ENCODE measurements at regions of chr16 and their contacts with region 1.

Region 1: GRCh38 chr16:11396241-11397048 is 51.2 kb downstream of the RMI2 start:
- DNase-seq: peak; percentile 97
- H3K4me3 ChIP-seq: no peak overlapping the region
- H3K27ac ChIP-seq: peak overlapping the region in 1 of 2 experiments; percentile 25; a peak in 1 of 4 replicates
- H3K4me1 ChIP-seq: peaks cover 0 to 12% of the 10 kb centered on the region in 2 experiments; a peak in 1 of 4 replicates
- H3K27me3 ChIP-seq: no peaks in the 10 kb centered on the region
- CTCF ChIP-seq: peak; percentile 94
- EP300 ChIP-seq: no peak
- RAD21 ChIP-seq: peak; percentile 98

Region 2: GRCh38 chr16:11356573-11357331 is 39.7 kb before region 1 on chr16:
- CTCF ChIA-PET with region 1: interaction called, 14 read pairs
- POLR2A ChIA-PET with region 1: no interaction called
- DNase-seq: peak; percentile 71
- H3K4me3 ChIP-seq: no peak overlapping the region; a peak in 1 of 4 replicates
- H3K27ac ChIP-seq: peak overlapping the region in 1 of 2 experiments; percentile 70; a peak in 2 of 4 replicates
- H3K4me1 ChIP-seq: peaks cover 15 to 26% of the 10 kb centered on the region in 2 experiments; a peak in 3 of 4 replicates
- H3K27me3 ChIP-seq: no peaks in the 10 kb centered on the region
- CTCF ChIP-seq: peak; percentile 69
- EP300 ChIP-seq: no peak
- RAD21 ChIP-seq: peak; percentile 74

Region 3: DNA sequence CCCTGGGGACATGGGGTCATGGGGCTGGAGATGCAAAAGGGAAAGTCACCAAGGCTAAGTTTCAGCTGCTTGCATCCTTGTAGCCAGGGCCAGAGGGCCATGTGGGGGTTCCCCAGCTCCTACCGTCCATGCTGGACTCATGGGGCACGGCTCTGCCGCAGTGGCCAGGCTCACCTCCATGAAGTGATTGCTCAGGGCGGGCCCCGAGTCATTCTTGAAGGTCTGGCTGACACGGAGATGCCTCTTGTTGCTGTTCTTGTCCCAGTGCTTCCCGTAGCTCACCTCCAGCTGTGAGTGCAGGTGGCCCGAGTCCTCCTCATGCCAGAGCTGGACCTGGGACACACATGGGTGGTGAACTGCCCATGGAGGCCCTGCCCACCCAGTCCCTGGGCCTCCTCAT is 63.3 kb after region 1 on chr16:
- CTCF ChIA-PET with region 1: no interaction called
- POLR2A ChIA-PET with region 1: no interaction called
- DNase-seq: no peak
- H3K4me3 ChIP-seq: no peak overlapping the region
- H3K27ac ChIP-seq: no peak overlapping the region
- H3K4me1 ChIP-seq: no peaks in the 10 kb centered on the region; a peak in 1 of 4 replicates
- H3K27me3 ChIP-seq: no peaks in the 10 kb centered on the region
- CTCF ChIP-seq: no peak
- EP300 ChIP-seq: no peak
- RAD21 ChIP-seq: no peak

Region 4: GRCh38 chr16:11535471-11535870 is 139.0 kb after region 1 on chr16:
- CTCF ChIA-PET with region 1: interaction called, 65 read pairs
- POLR2A ChIA-PET with region 1: no interaction called
- DNase-seq: no peak
- H3K4me3 ChIP-seq: no peak overlapping the region
- H3K27ac ChIP-seq: no peak overlapping the region
- H3K4me1 ChIP-seq: no peaks in the 10 kb centered on the region; a peak in 1 of 4 replicates
- H3K27me3 ChIP-seq: no peaks in the 10 kb centered on the region
- CTCF ChIP-seq: no peak
- EP300 ChIP-seq: no peak
- RAD21 ChIP-seq: no peak

Region 5: GRCh38 chr16:11706180-11706742 is 309.8 kb after region 1 on chr16:
- CTCF ChIA-PET with region 1: interaction called, 103 read pairs
- POLR2A ChIA-PET with region 1: no interaction called
- DNase-seq: no peak
- H3K4me3 ChIP-seq: no peak overlapping the region
- H3K27ac ChIP-seq: no peak overlapping the region
- H3K4me1 ChIP-seq: peaks cover 6% of the 10 kb centered on the region in 2 experiments; a peak in 2 of 4 replicates
- H3K27me3 ChIP-seq: no peaks in the 10 kb centered on the region
- CTCF ChIP-seq: no peak
- EP300 ChIP-seq: no peak
- RAD21 ChIP-seq: no peak

Region 6: GRCh38 chr16:11797166-11797956 is 400.9 kb after region 1 on chr16 and contains the start of gene ZC3H7A:
- CTCF ChIA-PET with region 1: interaction called, 18 read pairs
- POLR2A ChIA-PET with region 1: no interaction called
- DNase-seq: peak; percentile 97
- H3K4me3 ChIP-seq: peak within 1 kb of the TSS; percentile 77 to 96
- H3K27ac ChIP-seq: peak within 1 kb of the TSS; percentile 95
- H3K4me1 ChIP-seq: peaks cover 33 to 37% of the 10 kb centered on the region in 2 experiments
- H3K27me3 ChIP-seq: no peaks in the 10 kb centered on the region
- CTCF ChIP-seq: peak; percentile 58
- EP300 ChIP-seq: no peak; a peak in 1 of 4 replicates
- RAD21 ChIP-seq: no peak
- polyA plus RNA-seq, gene ZC3H7A: 31.9 and 38.7 TPM in 2 replicates